ENCODE measurements at regions of chr11 and their contacts with region 1.

Region 1: DNA sequence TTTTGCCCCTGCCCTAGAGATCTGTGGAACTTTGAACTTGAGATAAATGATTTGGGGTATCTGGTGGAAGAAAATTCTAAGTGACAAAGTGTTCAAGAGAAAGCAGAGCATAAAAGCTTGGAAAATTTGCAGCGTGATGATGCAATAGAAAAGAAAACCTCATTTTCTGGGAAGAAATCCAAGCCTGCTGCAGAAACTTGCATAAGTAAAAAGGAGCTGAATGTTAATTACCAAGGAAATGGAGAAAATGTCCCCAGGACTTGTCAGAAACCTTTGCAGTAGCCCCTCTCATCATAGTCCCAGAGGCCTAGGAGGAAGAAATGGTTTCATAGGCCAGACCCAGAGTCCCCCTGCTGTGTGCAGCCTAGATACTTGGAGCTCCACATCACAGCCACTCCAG is 686.9 kb downstream of the FAM181B start:
- DNase-seq: no peak
- ATAC-seq: peak; percentile 29
- H3K4me3 ChIP-seq: no peak overlapping the region
- H3K27ac ChIP-seq: no peak overlapping the region
- H3K4me1 ChIP-seq: no peaks in the 10 kb centered on the region
- H3K27me3 ChIP-seq: no peaks in the 10 kb centered on the region

Region 2: DNA sequence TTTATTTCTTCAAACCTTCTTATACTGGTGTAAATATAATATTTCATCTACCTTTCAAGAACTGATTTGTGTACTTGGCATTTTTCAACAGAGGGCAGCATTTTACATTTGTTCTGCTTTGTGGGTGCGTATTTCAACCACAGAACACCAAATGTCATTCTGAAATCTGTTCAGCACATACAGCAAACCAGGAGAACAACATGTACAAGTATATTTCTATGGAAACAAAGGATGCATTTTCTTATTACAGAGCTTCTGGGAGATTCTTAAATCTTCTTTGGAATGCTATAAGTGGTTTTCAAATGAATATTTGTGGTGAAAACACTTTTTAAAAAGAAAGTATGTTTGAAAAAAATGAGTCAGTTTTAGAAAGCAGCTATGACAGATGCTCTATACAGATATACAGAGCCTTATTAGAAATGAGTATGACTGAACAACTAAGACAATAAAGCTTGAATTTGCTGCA is 259.2 kb before region 1 on chr11:
- intact Hi-C with region 1: loop called in 1 of 2 experiments (anchors 10 kb)
- DNase-seq: no peak
- ATAC-seq: no peak
- H3K4me3 ChIP-seq: no peak overlapping the region
- H3K27ac ChIP-seq: no peak overlapping the region
- H3K4me1 ChIP-seq: peaks cover 0 to 3% of the 10 kb centered on the region in 2 donors
- H3K27me3 ChIP-seq: no peaks in the 10 kb centered on the region

Region 3: GRCh38 chr11:81829976-81830375 is 216.8 kb before region 1 on chr11:
- intact Hi-C with region 1: no loop called
- DNase-seq: no peak
- ATAC-seq: no peak
- H3K4me3 ChIP-seq: no peak overlapping the region
- H3K27ac ChIP-seq: no peak overlapping the region
- H3K4me1 ChIP-seq: no peaks in the 10 kb centered on the region
- H3K27me3 ChIP-seq: no peaks in the 10 kb centered on the region

Region 4: GRCh38 chr11:82059505-82059904 is 12.7 kb after region 1 on chr11:
- intact Hi-C with region 1: no loop called
- DNase-seq: no peak
- ATAC-seq: no peak
- H3K4me3 ChIP-seq: no peak overlapping the region
- H3K27ac ChIP-seq: no peak overlapping the region
- H3K4me1 ChIP-seq: no peaks in the 10 kb centered on the region
- H3K27me3 ChIP-seq: no peaks in the 10 kb centered on the region